ENCODE measurements at regions of chr5 and their contacts with region 1.

Region 1: DNA sequence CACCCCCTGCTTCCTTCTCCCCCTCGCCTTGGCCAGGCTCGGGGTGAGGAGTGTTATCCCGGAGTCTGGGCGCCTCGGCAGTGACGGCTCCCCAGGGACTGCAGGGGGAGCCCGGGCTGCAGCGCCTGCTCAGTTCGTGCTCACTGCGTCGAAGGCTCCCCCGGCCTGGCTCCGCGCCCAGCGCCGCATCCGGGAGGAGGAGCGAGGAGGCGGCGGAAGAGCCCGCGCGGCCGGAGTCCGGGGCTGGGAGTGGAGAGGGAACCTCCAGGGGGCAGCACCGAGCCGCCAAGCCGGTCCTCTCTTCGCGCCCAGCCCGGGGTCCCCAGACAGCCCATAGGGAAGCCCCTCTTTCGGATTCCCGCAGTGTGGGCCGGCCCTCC is 1.3 kb upstream of the EGR1 start:
- DNase-seq: peak; percentile 85 to 99 (median 90)

Region 2: GRCh38 chr5:138491669-138492559 is 27.9 kb after region 1 on chr5:
- intact Hi-C with region 1: loop called (anchors 1 kb)
- DNase-seq: peak; percentile 83 to 99 (median 92)

Region 3: GRCh38 chr5:138503487-138504270 is 39.7 kb after region 1 on chr5:
- intact Hi-C with region 1: loop called (anchors 1 kb)
- DNase-seq: peak in 3 of 10 donors; percentile 41 to 50 (median 47)

Region 4: GRCh38 chr5:138542956-138543729 is 79.1 kb after region 1 on chr5 and contains the start of gene ETF1:
- intact Hi-C with region 1: loop called (anchors 2 kb)
- DNase-seq: peak; percentile 100